Activated CD4-positive, alpha-beta T cell treated with anti-CD3 and anti-CD28 coated beads for 36 hours (primary cell): ENCODE measurements at regions of chr20 and their contacts with region 1.

Region 1: GRCh38 chr20:37178839-37179670 is at the starts of genes MROH8 and RPN2:
- DNase-seq: peak; percentile 98
- ATAC-seq: peak; percentile 97
- H3K4me3 Mint-ChIP-seq: peak within 1 kb of the TSS; percentile 87
- H3K27ac Mint-ChIP-seq: peak within 1 kb of the TSS; percentile 92
- H3K4me1 Mint-ChIP-seq: peaks cover 33% of the 10 kb centered on the region
- H3K27me3 Mint-ChIP-seq: no peaks in the 10 kb centered on the region
- total RNA-seq, gene MROH8: 3.0 to 4.5 TPM
- total RNA-seq, gene RPN2: 103 to 115 TPM

Region 2: GRCh38 chr20:36951198-36951976 is 227.7 kb before region 1 on chr20 and contains the start of gene SAMHD1:
- CTCF ChIA-PET with region 1: no interaction called
- POLR2A ChIA-PET with region 1: no interaction called
- intact Hi-C with region 1: loop called in 1 of 2 experiments (anchors 2 kb)
- DNase-seq: peak; percentile 94
- ATAC-seq: peak; percentile 95
- H3K4me3 Mint-ChIP-seq: peak within 1 kb of the TSS; percentile 92
- H3K27ac Mint-ChIP-seq: peak within 1 kb of the TSS; percentile 94
- H3K4me1 Mint-ChIP-seq: peaks cover 49% of the 10 kb centered on the region
- H3K27me3 Mint-ChIP-seq: no peaks in the 10 kb centered on the region
- total RNA-seq, gene SAMHD1: 35.6 to 36.9 TPM

Region 3: GRCh38 chr20:37042986-37043972 is 135.8 kb before region 1 on chr20:
- CTCF ChIA-PET with region 1: no interaction called
- POLR2A ChIA-PET with region 1: no interaction called
- intact Hi-C with region 1: no loop called
- DNase-seq: peak; percentile 45
- ATAC-seq: peak; percentile 82
- H3K4me3 Mint-ChIP-seq: peak overlapping the region; percentile 54
- H3K27ac Mint-ChIP-seq: peak overlapping the region; percentile 88
- H3K4me1 Mint-ChIP-seq: peaks cover 34% of the 10 kb centered on the region
- H3K27me3 Mint-ChIP-seq: no peaks in the 10 kb centered on the region

Region 4: GRCh38 chr20:37095599-37096414 is 83.2 kb before region 1 on chr20 and contains the start of gene RBL1:
- CTCF ChIA-PET with region 1: interaction called, 4 read pairs
- POLR2A ChIA-PET with region 1: interaction called, 12 read pairs
- intact Hi-C with region 1: loop called (anchors 1 to 2 kb)
- DNase-seq: peak; percentile 94
- ATAC-seq: peak; percentile 83
- H3K4me3 Mint-ChIP-seq: peak within 1 kb of the TSS; percentile 95
- H3K27ac Mint-ChIP-seq: peak within 1 kb of the TSS; percentile 100
- H3K4me1 Mint-ChIP-seq: peaks cover 26% of the 10 kb centered on the region
- H3K27me3 Mint-ChIP-seq: no peaks in the 10 kb centered on the region
- total RNA-seq, gene RBL1: 39.5 to 43.2 TPM

Region 5: GRCh38 chr20:37192137-37192854 is 13.2 kb after region 1 on chr20:
- CTCF ChIA-PET with region 1: interaction called, 36 read pairs
- POLR2A ChIA-PET with region 1: interaction called, 9 read pairs
- intact Hi-C with region 1: no loop called
- DNase-seq: peak; percentile 83
- ATAC-seq: peak; percentile 72
- H3K4me3 Mint-ChIP-seq: no peak overlapping the region
- H3K27ac Mint-ChIP-seq: peak overlapping the region; percentile 49
- H3K4me1 Mint-ChIP-seq: peaks cover 76% of the 10 kb centered on the region
- H3K27me3 Mint-ChIP-seq: no peaks in the 10 kb centered on the region

Region 6: GRCh38 chr20:37294262-37294981 is 115.4 kb after region 1 on chr20:
- CTCF ChIA-PET with region 1: interaction called, 3 read pairs
- POLR2A ChIA-PET with region 1: no interaction called
- intact Hi-C with region 1: loop called in 1 of 2 experiments (anchors 1 kb)
- DNase-seq: no peak
- ATAC-seq: no peak
- H3K4me3 Mint-ChIP-seq: no peak overlapping the region
- H3K27ac Mint-ChIP-seq: no peak overlapping the region
- H3K4me1 Mint-ChIP-seq: peaks cover 54% of the 10 kb centered on the region
- H3K27me3 Mint-ChIP-seq: no peaks in the 10 kb centered on the region

Region 7: DNA sequence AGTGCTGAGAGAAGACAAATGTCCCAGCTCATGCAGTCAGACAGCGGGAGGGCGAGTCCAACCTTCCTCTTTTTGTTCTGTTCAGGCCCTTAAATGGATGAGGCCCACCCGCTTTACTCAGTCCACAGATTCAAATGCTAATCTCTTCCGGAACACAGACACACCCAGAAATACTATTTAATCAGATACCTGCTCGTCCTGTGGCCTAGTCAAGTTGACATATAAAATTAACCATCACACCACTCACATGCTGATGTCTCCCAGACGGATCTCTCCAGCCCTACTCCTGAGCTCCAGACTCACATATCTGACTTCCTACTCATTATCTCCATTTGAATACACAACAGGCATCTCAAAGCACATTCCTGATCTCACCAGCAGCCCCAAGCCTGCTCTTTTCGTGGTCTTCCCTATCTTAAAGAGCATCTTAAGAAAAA is 140.2 kb after region 1 on chr20:
- CTCF ChIA-PET with region 1: no interaction called
- POLR2A ChIA-PET with region 1: no interaction called
- intact Hi-C with region 1: no loop called
- DNase-seq: no peak
- ATAC-seq: no peak
- H3K4me3 Mint-ChIP-seq: no peak overlapping the region
- H3K27ac Mint-ChIP-seq: no peak overlapping the region
- H3K4me1 Mint-ChIP-seq: peaks cover 24% of the 10 kb centered on the region
- H3K27me3 Mint-ChIP-seq: no peaks in the 10 kb centered on the region

Region 8: GRCh38 chr20:38434743-38435554 is 1255.9 kb after region 1 on chr20 and contains the start of gene SNHG17:
- CTCF ChIA-PET with region 1: interaction called, 3 read pairs
- POLR2A ChIA-PET with region 1: no interaction called
- intact Hi-C with region 1: loop called in 1 of 2 experiments (anchors 2 kb)
- DNase-seq: peak; percentile 94
- ATAC-seq: peak; percentile 84
- H3K4me3 Mint-ChIP-seq: peak within 1 kb of the TSS; percentile 97
- H3K27ac Mint-ChIP-seq: peak within 1 kb of the TSS; percentile 98
- H3K4me1 Mint-ChIP-seq: peaks cover 39% of the 10 kb centered on the region
- H3K27me3 Mint-ChIP-seq: peaks cover 4% of the 10 kb centered on the region
- total RNA-seq, gene SNHG17: 70.7 to 72.4 TPM

Region 9: GRCh38 chr20:38472513-38473372 is 1293.7 kb after region 1 on chr20 and contains the start of gene RALGAPB:
- CTCF ChIA-PET with region 1: no interaction called
- POLR2A ChIA-PET with region 1: no interaction called
- intact Hi-C with region 1: loop called in 1 of 2 experiments (anchors 1 kb)
- DNase-seq: peak; percentile 99
- ATAC-seq: peak; percentile 96
- H3K4me3 Mint-ChIP-seq: peak within 1 kb of the TSS; percentile 85
- H3K27ac Mint-ChIP-seq: peak within 1 kb of the TSS; percentile 79
- H3K4me1 Mint-ChIP-seq: peaks cover 38% of the 10 kb centered on the region
- H3K27me3 Mint-ChIP-seq: no peaks in the 10 kb centered on the region
- total RNA-seq, gene RALGAPB: 23.5 to 27.1 TPM